Naive thymus-derived CD4-positive, alpha-beta T cell (primary cell): ENCODE measurements at regions of chr3 and their contacts with region 1.

Region 1: GRCh38 chr3:186783073-186783730 is at the start of gene EIF4A2:
- DNase-seq: peak; percentile 87 to 93 (median 91)
- ATAC-seq: peak; percentile 86
- H3K4me3 ChIP-seq: peak within 1 kb of the TSS; percentile 88
- H3K4me3 Mint-ChIP-seq: peak within 1 kb of the TSS; percentile 95 to 100 (median 99)
- H3K27ac ChIP-seq: peak within 1 kb of the TSS; percentile 97
- H3K27ac Mint-ChIP-seq: peak within 1 kb of the TSS; percentile 96 to 100 (median 99)
- H3K4me1 ChIP-seq: peaks cover 37 to 39% of the 10 kb centered on the region in 2 donors
- H3K4me1 Mint-ChIP-seq: peaks cover 22 to 59% (median 51%) of the 10 kb centered on the region in 7 donors
- H3K27me3 ChIP-seq: no peaks in the 10 kb centered on the region
- H3K27me3 Mint-ChIP-seq: peaks cover 0 to 3% (median 0%) of the 10 kb centered on the region in 5 donors
- total RNA-seq, gene EIF4A2: 401 to 804 (median 650) TPM

Region 2: DNA sequence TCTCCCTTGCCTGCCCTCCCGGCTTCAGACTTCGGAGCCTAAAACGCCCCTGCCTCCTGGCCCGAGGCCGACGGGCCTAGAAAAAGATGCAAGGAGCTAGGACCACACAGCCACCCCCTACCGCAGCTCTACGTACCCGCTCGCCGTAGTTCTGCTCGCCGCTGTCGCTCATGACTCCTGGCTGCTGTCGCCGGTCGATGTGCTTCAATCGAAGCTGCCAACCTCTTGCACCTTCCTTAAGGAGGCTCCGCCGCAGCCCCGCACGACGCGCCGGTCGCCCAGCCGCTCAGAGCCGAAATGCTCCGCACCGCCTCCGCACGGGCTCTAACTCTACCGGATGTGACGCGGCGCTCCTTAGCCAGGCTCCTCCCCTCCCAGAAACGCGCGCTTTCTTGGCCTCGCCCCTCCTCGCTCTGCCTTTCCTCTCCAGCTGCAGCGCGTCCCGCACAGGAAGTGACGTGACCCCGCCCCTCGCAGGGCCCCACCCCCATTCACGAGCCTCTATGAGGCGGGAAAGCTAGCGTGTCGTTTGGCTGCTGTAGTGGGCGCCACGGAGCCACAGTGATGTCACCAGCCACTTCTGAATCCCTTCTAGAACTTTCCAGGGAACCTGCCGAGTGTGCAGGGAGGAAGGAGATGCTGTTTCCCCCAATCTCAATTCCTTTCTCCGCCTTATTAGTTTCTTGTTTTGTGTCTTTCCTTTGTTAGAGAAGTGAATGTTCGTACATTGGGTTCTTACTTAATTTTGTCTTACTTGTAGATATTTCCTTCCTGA is 845.3 kb before region 1 on chr3 and contains the start of gene TRA2B:
- CTCF ChIA-PET with region 1: no interaction called
- POLR2A ChIA-PET with region 1: interaction called, 20 read pairs
- intact Hi-C with region 1: loop called (anchors 1 to 2 kb)
- DNase-seq: peak; percentile 93 to 99 (median 99)
- ATAC-seq: peak; percentile 94
- H3K4me3 ChIP-seq: peak within 1 kb of the TSS; percentile 99
- H3K4me3 Mint-ChIP-seq: peak within 1 kb of the TSS; percentile 91 to 100 (median 100)
- H3K27ac ChIP-seq: peak within 1 kb of the TSS; percentile 95
- H3K27ac Mint-ChIP-seq: peak within 1 kb of the TSS; percentile 99 to 100 (median 100)
- H3K4me1 ChIP-seq: peaks cover 16 to 20% of the 10 kb centered on the region in 2 donors
- H3K4me1 Mint-ChIP-seq: peaks cover 27 to 52% (median 41%) of the 10 kb centered on the region in 7 donors
- H3K27me3 ChIP-seq: no peaks in the 10 kb centered on the region
- H3K27me3 Mint-ChIP-seq: peaks cover 0 to 16% (median 0%) of the 10 kb centered on the region in 5 donors
- total RNA-seq, gene TRA2B: 194 to 673 (median 216) TPM

Region 3: GRCh38 chr3:186617038-186617946 is 165.9 kb before region 1 on chr3:
- CTCF ChIA-PET with region 1: interaction called, 6 read pairs
- POLR2A ChIA-PET with region 1: interaction called, 35 read pairs
- intact Hi-C with region 1: loop called in 1 of 2 experiments (anchors 2 kb)
- DNase-seq: peak; percentile 67 to 87 (median 83)
- ATAC-seq: peak; percentile 99
- H3K4me3 ChIP-seq: peak overlapping the region; percentile 23
- H3K4me3 Mint-ChIP-seq: peak overlapping the region; percentile 47 to 81 (median 74)
- H3K27ac ChIP-seq: no peak overlapping the region
- H3K27ac Mint-ChIP-seq: peak overlapping the region in 8 of 9 donors; percentile 51 to 81 (median 62)
- H3K4me1 ChIP-seq: peaks cover 5 to 10% of the 10 kb centered on the region in 2 donors
- H3K4me1 Mint-ChIP-seq: peaks cover 14 to 30% (median 21%) of the 10 kb centered on the region in 7 donors
- H3K27me3 ChIP-seq: no peaks in the 10 kb centered on the region
- H3K27me3 Mint-ChIP-seq: peaks cover 14 to 51% (median 26%) of the 10 kb centered on the region in 5 donors

Region 4: GRCh38 chr3:186806089-186807055 is 23.2 kb after region 1 on chr3 and contains the start of gene RFC4:
- CTCF ChIA-PET with region 1: interaction called, 5 read pairs
- POLR2A ChIA-PET with region 1: interaction called, 121 read pairs
- intact Hi-C with region 1: loop called (anchors 1 kb)
- DNase-seq: peak; percentile 66 to 86 (median 82)
- ATAC-seq: peak; percentile 91
- H3K4me3 ChIP-seq: peak within 1 kb of the TSS; percentile 95
- H3K4me3 Mint-ChIP-seq: peak within 1 kb of the TSS; percentile 89 to 97 (median 94)
- H3K27ac ChIP-seq: peak within 1 kb of the TSS; percentile 86
- H3K27ac Mint-ChIP-seq: peak within 1 kb of the TSS; percentile 84 to 97 (median 95)
- H3K4me1 ChIP-seq: peaks cover 17 to 21% of the 10 kb centered on the region in 2 donors
- H3K4me1 Mint-ChIP-seq: peaks cover 5 to 38% (median 18%) of the 10 kb centered on the region in 7 donors
- H3K27me3 ChIP-seq: no peaks in the 10 kb centered on the region
- H3K27me3 Mint-ChIP-seq: no peaks in the 10 kb centered on the region
- total RNA-seq, gene RFC4: 8.7 to 71.6 (median 22.1) TPM

Region 5: DNA sequence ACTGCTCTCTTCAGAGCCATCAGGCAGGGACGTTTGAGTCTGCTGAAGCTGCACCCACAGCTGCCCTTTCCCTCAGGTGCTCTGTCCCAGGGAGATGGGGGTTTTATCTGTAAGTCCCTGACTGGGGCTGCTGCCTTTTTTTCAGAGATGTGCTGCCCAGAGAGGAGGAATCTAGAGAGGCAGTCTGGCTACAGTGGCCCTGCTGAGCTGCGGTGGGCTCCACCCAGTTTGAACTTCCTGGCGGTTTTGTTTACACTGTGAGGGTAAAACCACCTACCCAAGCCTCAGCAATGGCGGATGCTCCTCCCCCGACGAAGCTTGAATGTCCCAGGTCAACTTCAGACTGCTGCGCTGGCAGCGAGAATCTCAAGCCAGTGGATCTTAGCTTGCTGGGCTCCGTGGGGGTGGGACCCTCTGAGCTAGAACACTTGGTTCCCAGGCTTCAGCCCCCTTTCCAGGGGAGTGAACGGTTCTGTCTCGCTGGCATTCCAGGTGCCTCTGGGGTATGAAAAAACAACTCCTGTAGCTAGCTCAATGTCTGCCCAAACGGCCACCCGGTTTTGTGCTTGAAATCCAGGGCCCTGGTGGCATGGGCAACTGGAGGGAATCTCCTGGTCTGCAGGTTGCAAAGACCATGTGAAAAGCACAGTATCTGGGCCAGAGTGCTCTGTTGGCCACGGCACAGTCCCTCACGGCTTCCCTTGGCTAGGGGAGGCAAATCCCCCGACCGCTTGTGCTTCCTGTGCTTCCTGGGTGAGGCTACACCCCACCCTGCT is 126.1 kb after region 1 on chr3:
- CTCF ChIA-PET with region 1: interaction called, 3 read pairs
- POLR2A ChIA-PET with region 1: interaction called, 11 read pairs
- intact Hi-C with region 1: no loop called
- DNase-seq: peak; percentile 40 to 86 (median 78)
- ATAC-seq: peak; percentile 86
- H3K4me3 ChIP-seq: peak overlapping the region; percentile 48
- H3K4me3 Mint-ChIP-seq: peak overlapping the region; percentile 61 to 78 (median 72)
- H3K27ac ChIP-seq: peak overlapping the region; percentile 66
- H3K27ac Mint-ChIP-seq: peak overlapping the region; percentile 88 to 94 (median 91)
- H3K4me1 ChIP-seq: peaks cover 17 to 18% of the 10 kb centered on the region in 2 donors
- H3K4me1 Mint-ChIP-seq: peaks cover 17 to 48% (median 37%) of the 10 kb centered on the region in 7 donors
- H3K27me3 ChIP-seq: no peaks in the 10 kb centered on the region
- H3K27me3 Mint-ChIP-seq: no peaks in the 10 kb centered on the region

Region 6: GRCh38 chr3:186976837-186977750 is 193.9 kb after region 1 on chr3:
- CTCF ChIA-PET with region 1: no interaction called
- POLR2A ChIA-PET with region 1: no interaction called
- intact Hi-C with region 1: no loop called
- DNase-seq: no peak
- ATAC-seq: no peak
- H3K4me3 ChIP-seq: no peak overlapping the region
- H3K4me3 Mint-ChIP-seq: no peak overlapping the region
- H3K27ac ChIP-seq: no peak overlapping the region
- H3K27ac Mint-ChIP-seq: peak overlapping the region in 2 of 9 donors; percentile 34 to 81
- H3K4me1 ChIP-seq: no peaks in the 10 kb centered on the region
- H3K4me1 Mint-ChIP-seq: peaks cover 12 to 36% (median 23%) of the 10 kb centered on the region in 7 donors
- H3K27me3 ChIP-seq: no peaks in the 10 kb centered on the region
- H3K27me3 Mint-ChIP-seq: no peaks in the 10 kb centered on the region

Region 7: GRCh38 chr3:187130346-187131066 is 347.3 kb after region 1 on chr3:
- CTCF ChIA-PET with region 1: no interaction called
- POLR2A ChIA-PET with region 1: interaction called, 8 read pairs
- intact Hi-C with region 1: loop called (anchors 1 to 2 kb)
- DNase-seq: peak in 7 of 9 donors; percentile 61 to 86 (median 81)
- ATAC-seq: peak; percentile 99
- H3K4me3 ChIP-seq: no peak overlapping the region
- H3K4me3 Mint-ChIP-seq: peak overlapping the region; percentile 43 to 86 (median 74)
- H3K27ac ChIP-seq: peak overlapping the region; percentile 68
- H3K27ac Mint-ChIP-seq: peak overlapping the region; percentile 95 to 99 (median 97)
- H3K4me1 ChIP-seq: peaks cover 19 to 22% of the 10 kb centered on the region in 2 donors
- H3K4me1 Mint-ChIP-seq: peaks cover 12 to 49% (median 25%) of the 10 kb centered on the region in 7 donors
- H3K27me3 ChIP-seq: no peaks in the 10 kb centered on the region
- H3K27me3 Mint-ChIP-seq: no peaks in the 10 kb centered on the region